PC-3 (cell line): ENCODE measurements at regions of chr16 and their contacts with region 1.

Region 1: GRCh38 chr16:85546695-85547448 is 66.2 kb upstream of the GSE1 start:
- DNase-seq: no peak
- ATAC-seq: no peak
- H3K4me3 ChIP-seq: no peak overlapping the region
- H3K27ac ChIP-seq: no peak overlapping the region
- H3K4me1 ChIP-seq: no peaks in the 10 kb centered on the region
- H3K27me3 ChIP-seq: no peaks in the 10 kb centered on the region
- CTCF ChIP-seq: no peak

Region 2: GRCh38 chr16:85564277-85565051 is 17.6 kb after region 1 on chr16:
- CTCF ChIA-PET with region 1: no interaction called
- POLR2A ChIA-PET with region 1: interaction called, 15 read pairs
- intact Hi-C with region 1: no loop called
- DNase-seq: peak; percentile 15
- ATAC-seq: no peak; the same call in 1 of the 2 replicates
- H3K4me3 ChIP-seq: no peak overlapping the region
- H3K27ac ChIP-seq: no peak overlapping the region
- H3K4me1 ChIP-seq: peaks cover 13% of the 10 kb centered on the region
- H3K27me3 ChIP-seq: no peaks in the 10 kb centered on the region
- CTCF ChIP-seq: peak; percentile 69